ENCODE measurements at regions of chr5 and their contacts with region 1.

Region 1: DNA sequence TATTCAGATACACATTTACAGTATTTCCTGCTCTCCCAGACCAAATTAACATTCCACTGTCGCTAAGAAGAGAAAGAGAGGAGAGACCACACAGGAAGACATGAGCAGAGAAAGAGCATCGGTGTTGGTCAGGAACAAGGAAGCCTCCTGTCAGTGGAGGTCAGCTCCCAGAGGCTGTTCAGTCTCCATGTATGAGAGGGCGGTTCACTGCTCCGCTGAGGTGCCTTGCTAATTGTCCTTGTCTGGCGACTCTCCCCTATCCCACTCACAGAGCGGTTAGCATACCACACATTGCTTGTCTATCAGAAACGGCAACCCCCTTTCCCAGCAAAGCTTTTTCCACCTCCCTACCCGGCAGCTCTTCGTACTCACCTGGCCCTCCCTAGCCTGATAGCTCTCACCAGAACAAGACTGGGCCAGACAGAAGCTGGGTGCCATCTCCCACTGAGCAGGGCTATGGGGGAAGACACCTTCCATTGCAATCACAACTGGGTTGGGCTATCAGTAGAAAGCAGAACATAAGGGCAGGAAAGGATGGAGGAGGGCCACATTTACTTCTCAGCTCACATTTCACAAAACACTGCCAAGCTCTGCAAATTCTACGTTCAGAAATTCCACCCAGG is 58.6 kb upstream of the LMNB1 start:
- DNase-seq: no peak
- ATAC-seq: peak; percentile 26; the same call in 1 of the 2 replicates
- H3K4me3 ChIP-seq: no peak overlapping the region
- H3K27ac ChIP-seq: no peak overlapping the region
- H3K4me1 ChIP-seq: no peaks in the 10 kb centered on the region
- H3K27me3 ChIP-seq: no peaks in the 10 kb centered on the region
- CTCF ChIP-seq: no peak

Region 2: DNA sequence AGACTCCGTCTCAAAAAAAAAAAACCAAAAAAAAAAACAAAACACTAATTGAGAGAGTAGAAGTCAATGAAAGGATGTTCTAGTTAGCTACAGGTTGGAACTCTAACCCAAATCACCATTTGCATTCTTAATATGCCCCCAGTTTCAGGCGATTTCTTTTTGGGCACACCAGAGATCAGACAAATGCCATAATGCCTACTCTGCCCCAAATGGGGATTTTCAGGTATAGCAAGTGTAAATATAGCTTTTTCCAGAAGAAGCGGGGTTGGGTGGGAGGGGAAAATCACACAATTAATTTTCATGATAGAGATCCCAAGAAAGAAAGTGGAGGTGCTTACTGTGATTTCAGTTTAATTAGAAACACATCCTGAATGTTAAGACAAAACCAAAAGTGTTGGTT is 33.3 kb after region 1 on chr5:
- CTCF ChIA-PET with region 1: no interaction called
- POLR2A ChIA-PET with region 1: interaction called, 11 read pairs
- in situ Hi-C with region 1: no loop called
- intact Hi-C with region 1: no loop called
- DNase-seq: no peak
- ATAC-seq: no peak
- H3K4me3 ChIP-seq: no peak overlapping the region
- H3K27ac ChIP-seq: no peak overlapping the region
- H3K4me1 ChIP-seq: peaks cover 6% of the 10 kb centered on the region
- H3K27me3 ChIP-seq: no peaks in the 10 kb centered on the region
- CTCF ChIP-seq: no peak